Esophagus muscularis mucosa (tissue), 4 donors: ENCODE measurements at regions of chr14 and their contacts with region 1.

Region 1: DNA sequence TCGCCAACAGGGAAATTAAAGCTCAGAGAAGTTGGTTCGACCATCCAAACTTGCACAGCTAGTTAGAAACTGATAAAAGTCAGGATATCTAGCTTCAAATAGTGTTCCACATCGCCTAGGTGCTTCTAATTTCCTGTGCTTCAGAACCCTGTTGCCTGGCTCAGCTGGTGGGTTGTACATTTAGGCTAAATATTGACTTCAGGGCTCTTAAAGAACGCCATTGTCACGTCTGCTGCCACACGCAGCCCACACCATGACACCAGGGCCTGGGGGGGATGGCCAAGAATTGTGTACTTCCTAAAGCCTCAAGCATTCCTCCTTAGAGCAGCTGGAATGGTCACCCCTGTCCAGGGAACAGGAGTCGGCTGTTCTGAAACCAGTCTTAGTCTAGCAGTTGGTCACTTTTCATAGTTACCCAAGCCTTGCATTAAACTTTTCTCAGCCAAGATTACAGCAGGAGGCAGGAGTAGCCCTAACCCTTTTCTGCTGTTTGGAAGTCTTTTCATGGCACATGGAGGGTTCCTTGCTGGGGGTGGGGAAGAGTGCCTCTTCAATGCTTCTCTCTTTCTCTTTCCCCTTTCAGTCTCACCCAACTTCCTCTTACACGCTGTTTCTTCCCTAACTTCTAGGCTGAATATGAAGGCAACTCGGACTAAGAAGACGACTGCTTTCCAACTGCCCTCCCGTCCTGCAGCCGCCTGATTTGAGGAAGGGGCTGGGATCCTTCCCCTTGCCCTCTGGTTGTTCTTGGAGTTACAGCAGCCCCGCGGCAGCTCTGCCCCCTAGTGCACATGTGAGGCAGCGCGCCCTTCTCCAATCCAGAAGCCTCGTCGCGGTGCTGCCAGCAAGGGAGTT is 17.1 kb downstream of the FOS start:
- DNase-seq: peak; percentile 96
- H3K4me3 ChIP-seq: peak overlapping the region; percentile 65 to 71 (median 67)
- H3K27ac ChIP-seq: peak overlapping the region; percentile 94 to 96 (median 96)
- H3K4me1 ChIP-seq: peaks cover 21 to 43% (median 32%) of the 10 kb centered on the region in 4 donors
- H3K27me3 ChIP-seq: no peaks in the 10 kb centered on the region
- CTCF ChIP-seq: peak; percentile 99
- EP300 ChIP-seq: no peak
- POLR2A ChIP-seq: peak; percentile 13

Region 2: DNA sequence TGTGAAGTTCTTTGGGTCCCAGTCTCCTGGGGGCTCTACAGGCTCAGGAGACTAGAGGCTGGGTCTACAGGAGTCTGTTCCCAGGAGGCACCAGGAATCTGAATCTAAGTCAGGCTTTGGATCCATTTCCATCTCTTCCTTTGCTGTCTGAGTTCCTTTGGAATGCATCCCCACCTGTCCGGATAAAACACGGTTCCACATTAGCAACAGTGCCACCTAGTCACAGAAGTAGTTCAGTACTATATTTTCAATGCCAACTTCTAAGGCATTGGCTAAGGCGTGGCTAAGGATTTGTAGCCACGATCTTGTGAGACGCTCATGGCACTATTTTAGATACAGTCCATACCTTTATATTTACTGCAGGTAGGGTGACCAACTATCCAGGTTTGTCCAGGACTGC is 211.2 kb before region 1 on chr14:
- intact Hi-C with region 1: no loop called
- DNase-seq: no peak
- H3K4me3 ChIP-seq: no peak overlapping the region
- H3K27ac ChIP-seq: no peak overlapping the region
- H3K4me1 ChIP-seq: peaks cover 0 to 31% (median 28%) of the 10 kb centered on the region in 4 donors
- H3K27me3 ChIP-seq: no peaks in the 10 kb centered on the region
- CTCF ChIP-seq: peak in 2 of 3 experiments; percentile 4 to 12
- EP300 ChIP-seq: no peak
- POLR2A ChIP-seq: no peak

Region 3: DNA sequence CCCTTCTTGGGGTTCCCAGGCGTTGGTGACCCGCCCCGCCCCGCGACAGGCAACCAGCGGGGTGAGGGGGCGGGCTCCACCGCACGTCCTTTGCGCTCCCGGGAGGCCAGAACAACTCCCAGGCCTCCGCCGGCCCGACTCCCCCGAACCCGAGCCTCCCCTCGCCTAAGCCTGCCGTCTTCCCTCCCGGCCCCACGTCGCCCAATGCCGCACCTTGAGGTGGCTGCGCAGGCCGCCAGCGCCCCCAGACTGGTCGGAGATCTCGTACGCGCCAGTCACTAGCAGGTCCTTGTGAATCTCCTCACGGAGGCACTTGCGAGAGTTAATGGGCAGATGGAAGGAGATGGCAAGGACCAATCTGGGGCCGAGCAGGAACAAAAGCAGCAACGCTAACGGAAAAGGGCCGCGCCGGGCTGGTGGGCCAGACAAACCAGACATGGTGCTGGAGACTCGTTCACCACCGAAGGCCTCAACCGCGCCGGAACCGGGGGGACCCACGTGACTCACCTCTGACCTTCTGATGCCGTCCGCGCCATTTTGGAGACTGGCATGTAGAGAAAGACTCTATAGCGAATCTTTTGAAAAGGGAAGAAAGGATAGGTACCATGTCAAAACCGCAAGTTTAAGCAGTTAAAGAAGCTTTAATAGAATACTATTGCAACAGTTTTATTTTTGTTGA is 119.4 kb before region 1 on chr14 and contains the start of gene TMED10:
- intact Hi-C with region 1: loop called (anchors 5 kb)
- DNase-seq: peak; percentile 98
- H3K4me3 ChIP-seq: peak within 1 kb of the TSS; percentile 83 to 96 (median 88)
- H3K27ac ChIP-seq: peak within 1 kb of the TSS; percentile 94 to 99 (median 97)
- H3K4me1 ChIP-seq: peaks cover 25 to 42% (median 35%) of the 10 kb centered on the region in 4 donors
- H3K27me3 ChIP-seq: no peaks in the 10 kb centered on the region
- CTCF ChIP-seq: no peak
- EP300 ChIP-seq: no peak
- POLR2A ChIP-seq: no peak
- total RNA-seq, gene TMED10: 115 to 164 (median 129) TPM

Region 4: GRCh38 chr14:75230140-75231045 is 65.3 kb before region 1 on chr14:
- intact Hi-C with region 1: loop called (anchors 5 kb)
- DNase-seq: no peak
- H3K4me3 ChIP-seq: no peak overlapping the region
- H3K27ac ChIP-seq: no peak overlapping the region
- H3K4me1 ChIP-seq: peaks cover 0 to 19% (median 7%) of the 10 kb centered on the region in 4 donors
- H3K27me3 ChIP-seq: no peaks in the 10 kb centered on the region
- CTCF ChIP-seq: peak in 1 of 3 experiments; percentile 20
- EP300 ChIP-seq: no peak
- POLR2A ChIP-seq: no peak